T-cell (primary cell): ENCODE measurements at regions of chr11 and their contacts with region 1.

Region 1: DNA sequence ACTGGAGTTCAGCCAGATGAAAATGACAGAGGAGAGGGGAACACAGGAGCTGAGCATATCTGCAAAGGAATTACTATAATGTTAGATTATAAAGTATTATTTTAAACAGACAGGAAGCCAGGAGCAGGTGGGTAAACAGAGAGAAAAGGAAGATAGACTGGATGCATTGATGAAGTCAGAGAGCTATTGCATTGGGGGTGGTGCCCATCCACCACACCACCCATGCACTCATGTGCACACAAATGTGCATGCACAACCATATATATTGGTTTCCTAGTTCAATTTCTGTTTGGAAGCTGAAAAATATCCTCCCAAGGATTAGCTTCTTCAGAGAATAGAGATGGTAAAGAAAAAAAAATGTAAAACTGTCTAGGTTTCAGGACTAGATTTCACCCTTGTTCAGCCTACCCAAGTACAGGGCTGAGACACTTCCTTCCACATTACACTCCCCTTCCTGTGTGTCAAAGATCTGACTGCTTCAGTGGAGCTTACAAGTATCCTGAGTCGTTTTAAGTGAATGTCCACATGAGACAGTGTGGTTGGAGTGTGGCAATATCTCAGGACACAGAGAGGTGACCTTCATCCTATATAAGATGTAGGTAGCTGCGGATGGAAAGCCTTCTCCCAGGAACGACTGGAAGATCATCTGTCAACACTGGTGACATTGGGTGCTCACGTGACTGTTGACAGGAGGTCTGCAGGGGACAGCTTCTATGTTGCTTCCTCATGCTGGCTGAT is 12.2 kb upstream of the SMPD1 start:
- DNase-seq: peak in 1 of 35 experiments; percentile 43
- ATAC-seq: peak; percentile 85 to 93 (median 88)
- H3K4me3 ChIP-seq: peak overlapping the region in 1 of 2 donors; percentile 2
- H3K4me3 Mint-ChIP-seq: peak overlapping the region in 2 of 3 donors; percentile 49 to 65
- H3K27ac ChIP-seq: peak overlapping the region; percentile 18
- H3K27ac Mint-ChIP-seq: peak overlapping the region; percentile 89 to 90
- H3K4me1 ChIP-seq: peaks cover 12 to 15% of the 10 kb centered on the region in 2 experiments
- H3K4me1 Mint-ChIP-seq: peaks cover 26 to 34% (median 29%) of the 10 kb centered on the region in 3 donors
- H3K27me3 ChIP-seq: peaks cover 0 to 6% of the 10 kb centered on the region in 2 experiments
- H3K27me3 Mint-ChIP-seq: no peaks in the 10 kb centered on the region

Region 2: GRCh38 chr11:6389921-6390724 is 12.1 kb after region 1 on chr11 and contains the start of gene SMPD1:
- CTCF ChIA-PET with region 1: interaction called, 9 to 51 read pairs
- POLR2A ChIA-PET with region 1: interaction called, 9 read pairs
- DNase-seq: peak; percentile 87 to 97 (median 92)
- ATAC-seq: peak; percentile 86 to 92 (median 88)
- H3K4me3 ChIP-seq: peak within 1 kb of the TSS; percentile 79 to 80
- H3K4me3 Mint-ChIP-seq: peak within 1 kb of the TSS; percentile 88 to 93 (median 90)
- H3K27ac ChIP-seq: peak within 1 kb of the TSS; percentile 85
- H3K27ac Mint-ChIP-seq: peak within 1 kb of the TSS; percentile 97 to 98
- H3K4me1 ChIP-seq: peaks cover 20 to 54% of the 10 kb centered on the region in 2 experiments
- H3K4me1 Mint-ChIP-seq: peaks cover 62 to 71% (median 67%) of the 10 kb centered on the region in 3 donors
- H3K27me3 ChIP-seq: no peaks in the 10 kb centered on the region
- H3K27me3 Mint-ChIP-seq: no peaks in the 10 kb centered on the region
- total RNA-seq, gene SMPD1: 33.5 to 58.3 (median 38.3) TPM

Region 3: GRCh38 chr11:6419009-6419631 is 41.0 kb after region 1 on chr11 and contains the start of gene APBB1:
- CTCF ChIA-PET with region 1: interaction called, 12 to 44 read pairs
- POLR2A ChIA-PET with region 1: interaction called in 1 of 2 experiments, 14 read pairs
- DNase-seq: peak; percentile 51 to 88 (median 73)
- ATAC-seq: peak; percentile 70 to 82 (median 78)
- H3K4me3 ChIP-seq: peak within 1 kb of the TSS; percentile 64 to 75
- H3K4me3 Mint-ChIP-seq: peak within 1 kb of the TSS in 1 of 3 donors; percentile 86
- H3K27ac ChIP-seq: peak within 1 kb of the TSS; percentile 57
- H3K27ac Mint-ChIP-seq: peak within 1 kb of the TSS; percentile 89
- H3K4me1 ChIP-seq: peaks cover 36 to 50% of the 10 kb centered on the region in 2 experiments
- H3K4me1 Mint-ChIP-seq: peaks cover 9 to 19% (median 15%) of the 10 kb centered on the region in 3 donors
- H3K27me3 ChIP-seq: peaks cover 0 to 2% of the 10 kb centered on the region in 2 experiments
- H3K27me3 Mint-ChIP-seq: peaks cover 0 to 19% of the 10 kb centered on the region in 2 donors
- total RNA-seq, gene APBB1: 71.3 to 152 (median 106) TPM

Region 4: GRCh38 chr11:6468712-6469495 is 90.8 kb after region 1 on chr11:
- CTCF ChIA-PET with region 1: interaction called, 9 to 10 read pairs
- POLR2A ChIA-PET with region 1: no interaction called
- DNase-seq: peak in 1 of 35 experiments; percentile 20
- ATAC-seq: no peak
- H3K4me3 ChIP-seq: no peak overlapping the region
- H3K4me3 Mint-ChIP-seq: no peak overlapping the region
- H3K27ac ChIP-seq: no peak overlapping the region
- H3K27ac Mint-ChIP-seq: no peak overlapping the region
- H3K4me1 ChIP-seq: peaks cover 7 to 12% of the 10 kb centered on the region in 2 experiments
- H3K4me1 Mint-ChIP-seq: peaks cover 15 to 22% (median 17%) of the 10 kb centered on the region in 3 donors
- H3K27me3 ChIP-seq: peaks cover 0 to 3% of the 10 kb centered on the region in 2 experiments
- H3K27me3 Mint-ChIP-seq: no peaks in the 10 kb centered on the region

Region 5: GRCh38 chr11:6497069-6497839 is 119.2 kb after region 1 on chr11 and contains the start of gene DNHD1:
- CTCF ChIA-PET with region 1: interaction called, 4 to 21 read pairs
- POLR2A ChIA-PET with region 1: no interaction called
- DNase-seq: no peak
- ATAC-seq: no peak
- H3K4me3 ChIP-seq: no peak within 1 kb of the TSS
- H3K4me3 Mint-ChIP-seq: no peak within 1 kb of the TSS
- H3K27ac ChIP-seq: no peak within 1 kb of the TSS
- H3K27ac Mint-ChIP-seq: no peak within 1 kb of the TSS
- H3K4me1 ChIP-seq: no peaks in the 10 kb centered on the region
- H3K4me1 Mint-ChIP-seq: peaks cover 0 to 9% (median 8%) of the 10 kb centered on the region in 3 donors
- H3K27me3 ChIP-seq: no peaks in the 10 kb centered on the region
- H3K27me3 Mint-ChIP-seq: no peaks in the 10 kb centered on the region
- total RNA-seq, gene DNHD1: 44.1 to 52.0 (median 47.8) TPM

Region 6: DNA sequence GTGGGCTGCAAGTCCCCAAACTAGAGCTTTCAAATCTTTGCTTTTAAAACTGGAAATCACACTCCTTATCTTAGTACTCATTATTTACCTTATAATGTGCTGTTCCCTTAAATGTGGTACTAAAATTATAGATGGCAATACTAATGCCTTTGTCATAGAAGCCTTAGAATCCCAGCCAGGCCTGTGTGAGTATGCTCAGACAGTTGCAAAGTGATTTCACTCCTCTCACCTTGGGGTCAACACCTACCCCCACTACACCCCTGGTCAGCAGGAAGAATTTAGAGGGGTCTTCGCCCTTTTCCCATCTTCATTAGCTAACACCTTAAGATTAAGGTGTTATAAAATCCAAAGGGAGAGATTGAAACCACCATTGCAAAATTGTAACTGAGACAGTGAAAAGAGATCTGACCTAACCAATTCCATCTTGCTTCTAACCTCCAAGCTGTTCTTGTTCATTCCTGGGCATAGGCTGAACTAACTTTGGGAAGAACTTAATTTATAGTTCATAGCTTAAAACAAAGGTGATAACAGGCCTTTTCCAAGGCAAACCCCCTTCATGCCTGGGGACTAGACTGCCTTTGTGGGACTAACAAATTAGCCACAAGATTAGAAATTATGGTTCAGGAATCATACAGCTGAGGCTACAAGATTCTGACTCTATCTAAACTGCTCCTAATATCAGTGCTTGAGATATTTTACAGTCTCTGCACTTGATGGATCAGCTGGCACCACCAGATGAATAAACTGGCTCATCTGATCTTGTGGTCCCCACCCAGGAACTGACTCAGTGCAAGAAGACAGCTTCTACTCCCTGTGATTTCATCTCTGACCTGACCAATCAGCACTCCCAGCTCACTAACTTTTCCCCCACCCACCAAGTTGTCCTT is 315.5 kb after region 1 on chr11:
- CTCF ChIA-PET with region 1: interaction called, 6 to 13 read pairs
- POLR2A ChIA-PET with region 1: interaction called in 1 of 2 experiments, 4 read pairs
- DNase-seq: peak in 16 of 35 experiments; percentile 6 to 50 (median 30)
- ATAC-seq: peak in 3 of 4 experiments; percentile 55 to 74 (median 60)
- H3K4me3 ChIP-seq: no peak overlapping the region
- H3K4me3 Mint-ChIP-seq: peak overlapping the region in 1 of 3 donors; percentile 2
- H3K27ac ChIP-seq: no peak overlapping the region
- H3K27ac Mint-ChIP-seq: peak overlapping the region; percentile 61 to 71
- H3K4me1 ChIP-seq: peaks cover 0 to 10% of the 10 kb centered on the region in 2 experiments
- H3K4me1 Mint-ChIP-seq: peaks cover 22 to 33% (median 32%) of the 10 kb centered on the region in 3 donors
- H3K27me3 ChIP-seq: no peaks in the 10 kb centered on the region
- H3K27me3 Mint-ChIP-seq: no peaks in the 10 kb centered on the region